ENCODE measurements at regions of chr2 and their contacts with region 1.

Region 1: DNA sequence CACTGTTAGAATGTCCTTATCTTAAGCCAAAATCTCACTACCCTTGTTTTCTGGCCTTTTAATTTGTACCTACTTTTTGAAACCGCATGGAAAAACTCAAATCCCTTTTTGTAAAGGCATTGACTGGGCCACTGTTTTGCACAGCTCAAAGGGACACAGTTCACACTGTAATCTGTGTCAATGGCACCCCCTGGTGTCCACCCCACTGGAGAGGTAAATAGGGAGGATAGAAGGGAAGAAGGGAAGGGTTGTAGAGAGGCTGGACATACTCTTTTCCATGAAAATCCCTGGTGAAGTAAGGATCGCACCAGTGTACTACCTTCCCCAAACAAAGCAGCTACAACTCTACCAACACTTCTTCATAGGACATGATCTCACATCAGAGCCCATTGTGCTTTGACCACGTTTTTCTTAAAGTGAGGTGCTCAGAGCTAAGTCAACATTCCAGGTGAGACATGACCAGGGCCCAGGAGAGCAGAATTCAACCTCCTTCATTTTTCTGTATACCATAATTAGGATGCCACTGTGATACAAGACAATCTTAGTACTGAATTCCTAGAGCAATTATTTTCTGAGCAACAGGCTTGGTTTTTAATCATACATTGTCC is 92.4 kb upstream of the RMDN2 start:
- DNase-seq: peak; percentile 68
- ATAC-seq: peak; percentile 92
- H3K4me3 ChIP-seq: no peak overlapping the region
- H3K27ac ChIP-seq: peak overlapping the region; percentile 50
- H3K4me1 ChIP-seq: peaks cover 4% of the 10 kb centered on the region
- H3K27me3 ChIP-seq: no peaks in the 10 kb centered on the region
- CTCF ChIP-seq: peak; percentile 74 to 88 (median 84)
- EP300 ChIP-seq: no peak
- POLR2A ChIP-seq: no peak
- RAD21 ChIP-seq: peak; percentile 100

Region 2: GRCh38 chr2:37402636-37403035 is 430.1 kb before region 1 on chr2:
- CTCF ChIA-PET with region 1: interaction called, 104 read pairs
- POLR2A ChIA-PET with region 1: no interaction called
- RAD21 ChIA-PET with region 1: interaction called, 78 read pairs
- SMC1A ChIA-PET with region 1: interaction called, 163 read pairs
- in situ Hi-C with region 1: no loop called
- intact Hi-C with region 1: no loop called
- DNase-seq: no peak
- ATAC-seq: no peak
- H3K4me3 ChIP-seq: no peak overlapping the region
- H3K27ac ChIP-seq: no peak overlapping the region
- H3K4me1 ChIP-seq: no peaks in the 10 kb centered on the region
- H3K27me3 ChIP-seq: no peaks in the 10 kb centered on the region
- CTCF ChIP-seq: no peak
- EP300 ChIP-seq: no peak
- POLR2A ChIP-seq: no peak
- RAD21 ChIP-seq: no peak

Region 3: GRCh38 chr2:37570773-37571586 is 261.7 kb before region 1 on chr2:
- CTCF ChIA-PET with region 1: interaction called, 9 read pairs
- POLR2A ChIA-PET with region 1: no interaction called
- RAD21 ChIA-PET with region 1: interaction called, 7 read pairs
- SMC1A ChIA-PET with region 1: interaction called, 7 read pairs
- in situ Hi-C with region 1: no loop called
- intact Hi-C with region 1: loop called (anchors 1 kb)
- DNase-seq: peak; percentile 98
- ATAC-seq: peak; percentile 87
- H3K4me3 ChIP-seq: peak overlapping the region; percentile 0; the same call in 1 of the 2 replicates
- H3K27ac ChIP-seq: peak overlapping the region; percentile 90
- H3K4me1 ChIP-seq: peaks cover 41% of the 10 kb centered on the region
- H3K27me3 ChIP-seq: no peaks in the 10 kb centered on the region
- CTCF ChIP-seq: no peak
- EP300 ChIP-seq: peak; percentile 86 to 87
- POLR2A ChIP-seq: peak; percentile 59
- RAD21 ChIP-seq: peak; percentile 45

Region 4: DNA sequence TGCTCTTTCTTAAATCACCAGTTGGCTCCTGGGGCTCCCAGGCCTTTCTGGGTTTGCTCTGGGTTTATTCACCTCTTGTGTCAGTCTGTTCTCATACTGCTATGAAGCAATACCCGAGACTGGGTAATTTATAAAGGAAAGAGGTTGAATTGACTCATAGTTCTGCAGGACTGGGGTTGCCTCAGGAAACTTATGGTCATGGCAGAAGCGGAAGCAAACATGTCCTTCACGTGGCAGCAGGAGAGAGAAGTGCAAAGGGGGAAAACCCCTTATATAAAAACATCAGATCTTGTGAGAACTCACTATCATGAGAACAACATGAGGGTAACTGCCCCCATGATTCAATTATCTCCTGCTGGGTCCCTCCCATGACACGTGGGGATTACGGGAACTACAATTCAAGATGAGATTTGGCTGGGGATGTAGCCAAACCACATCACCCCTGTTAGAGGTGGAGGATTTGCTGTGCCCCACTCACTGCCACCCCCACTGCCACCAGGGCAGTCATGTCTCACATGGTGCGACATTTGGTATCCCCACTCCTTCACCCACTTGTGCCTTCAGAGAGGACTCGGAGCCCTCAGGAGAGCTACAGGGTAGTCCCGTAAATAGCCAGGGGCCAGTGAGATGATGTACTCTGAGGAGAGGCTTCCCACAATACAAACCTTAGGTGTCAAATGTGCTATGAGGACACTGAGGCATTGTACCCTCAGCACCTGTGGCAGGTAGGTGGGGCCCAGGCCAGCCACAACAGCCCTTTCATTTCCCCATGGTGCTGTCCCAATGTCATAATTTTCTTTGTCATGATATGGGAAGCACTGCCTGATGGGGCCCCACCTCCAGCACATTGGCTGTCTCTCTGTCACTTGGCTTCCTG is 197.0 kb before region 1 on chr2:
- CTCF ChIA-PET with region 1: interaction called, 4 read pairs
- POLR2A ChIA-PET with region 1: no interaction called
- RAD21 ChIA-PET with region 1: interaction called, 3 read pairs
- SMC1A ChIA-PET with region 1: interaction called, 3 read pairs
- in situ Hi-C with region 1: no loop called
- intact Hi-C with region 1: loop called (anchors 5 kb)
- DNase-seq: peak; percentile 92
- ATAC-seq: peak; percentile 80
- H3K4me3 ChIP-seq: no peak overlapping the region
- H3K27ac ChIP-seq: peak overlapping the region; percentile 91
- H3K4me1 ChIP-seq: peaks cover 26% of the 10 kb centered on the region
- H3K27me3 ChIP-seq: no peaks in the 10 kb centered on the region
- CTCF ChIP-seq: no peak
- EP300 ChIP-seq: peak; percentile 27 to 69; a peak in 3 of 4 replicates
- POLR2A ChIP-seq: peak; percentile 14
- RAD21 ChIP-seq: peak; percentile 37; the same call in 1 of the 2 replicates

Region 5: DNA sequence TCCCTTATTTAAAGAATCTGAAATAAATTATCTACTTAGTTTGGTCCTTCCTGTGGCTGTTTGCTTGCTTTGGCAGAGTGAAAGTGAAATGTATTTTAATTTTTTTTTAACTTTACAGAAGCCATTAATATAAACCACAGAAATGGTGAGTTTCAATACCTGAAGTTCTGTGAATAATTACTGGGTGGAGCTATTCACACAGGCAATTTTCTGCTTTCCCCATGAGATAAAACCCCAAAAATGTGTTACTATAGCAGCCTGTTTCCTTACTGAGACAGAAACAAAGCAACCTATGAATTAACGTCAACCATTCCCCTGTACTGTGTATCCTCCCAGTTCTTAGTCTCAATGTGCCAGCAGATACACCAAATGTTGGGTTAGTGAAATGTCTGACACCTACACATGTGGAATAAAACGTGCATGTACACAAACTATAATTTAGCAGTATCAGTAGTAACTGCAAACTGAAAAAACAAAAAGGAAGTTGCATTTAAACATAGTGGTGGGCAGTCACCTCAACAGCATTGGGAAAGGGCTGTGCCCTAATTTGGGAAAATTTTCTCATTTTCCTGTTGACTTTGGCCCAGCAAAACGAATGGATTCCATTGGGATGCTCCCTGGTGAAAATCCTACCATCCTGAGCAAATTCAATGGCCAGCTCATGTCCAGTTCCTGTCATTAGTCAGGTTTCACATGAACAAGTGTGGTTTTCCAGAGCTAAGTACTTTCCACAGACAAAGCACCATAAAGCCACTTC is 19.3 kb after region 1 on chr2:
- CTCF ChIA-PET with region 1: interaction called, 15 read pairs
- POLR2A ChIA-PET with region 1: interaction called, 9 read pairs
- RAD21 ChIA-PET with region 1: interaction called, 40 read pairs
- SMC1A ChIA-PET with region 1: interaction called, 26 read pairs
- in situ Hi-C with region 1: no loop called
- intact Hi-C with region 1: no loop called
- DNase-seq: peak; percentile 80
- ATAC-seq: peak; percentile 86
- H3K4me3 ChIP-seq: peak overlapping the region; percentile 17; the same call in 1 of the 2 replicates
- H3K27ac ChIP-seq: peak overlapping the region; percentile 67
- H3K4me1 ChIP-seq: peaks cover 32% of the 10 kb centered on the region
- H3K27me3 ChIP-seq: no peaks in the 10 kb centered on the region
- CTCF ChIP-seq: peak in 1 of 3 experiments; percentile 8; a peak in 1 of 6 replicates
- EP300 ChIP-seq: peak; percentile 23 to 53; a peak in 1 of 4 replicates
- POLR2A ChIP-seq: no peak
- RAD21 ChIP-seq: peak; percentile 45

Region 6: DNA sequence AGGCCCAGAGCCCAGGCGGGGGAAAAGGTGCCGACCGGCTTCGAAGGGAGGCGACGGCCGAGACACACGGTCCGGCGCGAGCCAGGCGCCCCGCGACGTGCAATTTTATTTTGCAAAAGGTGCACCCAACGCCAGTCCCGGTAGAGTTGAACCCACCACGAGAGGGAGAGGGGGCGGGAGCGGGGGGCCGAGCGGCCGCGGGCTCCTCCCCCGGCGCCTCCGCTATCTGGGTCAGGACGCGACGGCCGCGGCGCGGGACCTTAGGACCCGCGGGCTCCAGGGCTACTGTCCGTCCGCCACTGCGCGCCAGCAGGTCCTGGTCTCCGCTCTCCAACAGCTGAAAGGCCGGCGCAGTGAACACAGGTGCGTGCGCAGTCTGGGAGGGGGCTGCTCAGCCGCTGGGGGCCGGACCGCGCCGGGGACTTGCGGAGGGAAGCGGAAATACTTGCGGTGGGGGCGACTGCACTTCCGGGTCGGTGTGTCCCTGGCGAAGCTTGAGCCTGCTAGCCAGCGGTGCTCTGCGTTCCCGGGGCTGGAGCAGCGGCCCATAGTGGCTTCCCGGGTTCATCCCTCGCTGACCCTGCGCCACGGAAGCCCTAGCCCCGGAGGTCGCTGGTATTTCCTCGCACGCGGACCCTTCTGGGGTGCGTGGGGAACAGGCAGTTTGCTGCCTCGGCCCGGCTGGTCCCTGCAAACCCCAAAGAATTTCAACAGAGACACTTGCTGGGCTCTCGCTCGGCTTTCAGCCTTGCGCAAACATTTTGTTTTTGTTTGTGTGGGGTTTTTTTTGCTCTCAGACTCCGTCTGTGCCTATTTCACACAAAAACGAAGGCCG is 92.6 kb after region 1 on chr2 and contains the start of gene RMDN2:
- CTCF ChIA-PET with region 1: no interaction called
- POLR2A ChIA-PET with region 1: no interaction called
- RAD21 ChIA-PET with region 1: no interaction called
- SMC1A ChIA-PET with region 1: no interaction called
- in situ Hi-C with region 1: no loop called
- intact Hi-C with region 1: no loop called
- DNase-seq: peak; percentile 42
- ATAC-seq: peak; percentile 96
- H3K4me3 ChIP-seq: peak within 1 kb of the TSS; percentile 73
- H3K27ac ChIP-seq: peak within 1 kb of the TSS; percentile 88
- H3K4me1 ChIP-seq: peaks cover 7% of the 10 kb centered on the region
- H3K27me3 ChIP-seq: no peaks in the 10 kb centered on the region
- CTCF ChIP-seq: no peak
- EP300 ChIP-seq: no peak
- POLR2A ChIP-seq: peak; percentile 87
- RAD21 ChIP-seq: 0 out of 2 replicates have a peak, but pooled peaks have one; percentile 10
- polyA plus RNA-seq, gene RMDN2: 6.6 to 9.1 TPM